SK-N-SH (cell line): ENCODE measurements at regions of chr22 and their contacts with region 1.

Region 1: DNA sequence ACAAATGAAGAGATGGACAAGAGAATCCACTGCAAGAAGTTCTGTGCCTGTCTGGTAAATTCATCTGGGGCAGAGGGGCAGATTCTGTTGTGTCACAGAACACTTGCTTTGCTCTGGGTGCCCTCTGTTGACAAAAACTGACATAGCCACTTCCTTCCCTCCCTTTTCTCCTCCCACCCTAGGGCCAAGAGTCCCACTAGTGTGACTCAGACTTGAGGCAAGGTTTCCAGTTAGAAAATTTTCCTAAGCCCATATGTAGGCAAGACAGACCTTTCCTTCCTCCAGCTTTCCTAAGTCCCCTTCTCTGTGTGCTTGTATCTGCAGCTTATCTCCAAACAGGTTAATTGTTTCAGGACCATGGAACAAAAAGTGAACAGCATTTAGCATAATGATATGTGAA is 106.8 kb downstream of the RBFOX2 start:
- DNase-seq: peak; percentile 49
- H3K4me3 ChIP-seq: no peak overlapping the region; a peak in 1 of 4 replicates
- H3K27ac ChIP-seq: peak overlapping the region; percentile 47 to 72; a peak in 3 of 4 replicates
- H3K4me1 ChIP-seq: peaks cover 36% of the 10 kb centered on the region in 2 experiments; a peak in 3 of 4 replicates
- H3K27me3 ChIP-seq: no peaks in the 10 kb centered on the region
- CTCF ChIP-seq: peak; percentile 73
- EP300 ChIP-seq: no peak
- RAD21 ChIP-seq: peak; percentile 90

Region 2: GRCh38 chr22:35712672-35713071 is 209.1 kb before region 1 on chr22:
- CTCF ChIA-PET with region 1: no interaction called
- POLR2A ChIA-PET with region 1: no interaction called
- DNase-seq: no peak
- H3K4me3 ChIP-seq: no peak overlapping the region
- H3K27ac ChIP-seq: no peak overlapping the region
- H3K4me1 ChIP-seq: no peaks in the 10 kb centered on the region
- H3K27me3 ChIP-seq: no peaks in the 10 kb centered on the region
- CTCF ChIP-seq: no peak
- EP300 ChIP-seq: no peak
- RAD21 ChIP-seq: peak; percentile 26; the same call in 1 of the 2 replicates

Region 3: DNA sequence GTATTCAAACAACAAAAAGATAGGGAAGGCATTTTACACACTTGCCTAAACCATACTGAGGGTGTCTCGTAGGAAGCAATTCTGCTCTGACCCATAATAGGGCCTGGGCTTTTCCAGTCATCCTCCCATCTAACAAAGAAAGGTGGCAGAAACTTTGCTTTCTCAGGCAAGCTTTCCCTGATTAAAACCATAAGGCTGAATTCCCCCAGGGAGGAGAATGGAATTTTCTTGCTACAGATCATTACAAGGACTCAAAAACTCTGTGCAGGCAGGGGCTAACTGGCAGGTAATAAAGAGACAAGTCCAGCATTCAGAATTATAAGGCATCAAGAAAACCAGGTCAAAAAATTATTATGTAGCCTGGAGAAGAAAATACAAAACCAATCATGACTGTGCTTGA is 16.4 kb after region 1 on chr22:
- CTCF ChIA-PET with region 1: interaction called, 14 read pairs
- POLR2A ChIA-PET with region 1: no interaction called
- DNase-seq: no peak
- H3K4me3 ChIP-seq: no peak overlapping the region
- H3K27ac ChIP-seq: peak overlapping the region in 1 of 2 experiments; percentile 81; a peak in 2 of 4 replicates
- H3K4me1 ChIP-seq: peaks cover 0 to 42% of the 10 kb centered on the region in 2 experiments; a peak in 3 of 4 replicates
- H3K27me3 ChIP-seq: no peaks in the 10 kb centered on the region
- CTCF ChIP-seq: no peak
- EP300 ChIP-seq: no peak
- RAD21 ChIP-seq: no peak